HEK293T (cell line): ENCODE measurements at regions of chr2 and their contacts with region 1.

Region 1: GRCh38 chr2:71285706-71286105 is 45.9 kb upstream of the ZNF638 start:
- DNase-seq: no peak

Region 2: GRCh38 chr2:71306762-71307161 is 21.1 kb after region 1 on chr2:
- CTCF ChIA-PET with region 1: interaction called, 11 read pairs
- POLR2A ChIA-PET with region 1: no interaction called
- DNase-seq: no peak

Region 3: DNA sequence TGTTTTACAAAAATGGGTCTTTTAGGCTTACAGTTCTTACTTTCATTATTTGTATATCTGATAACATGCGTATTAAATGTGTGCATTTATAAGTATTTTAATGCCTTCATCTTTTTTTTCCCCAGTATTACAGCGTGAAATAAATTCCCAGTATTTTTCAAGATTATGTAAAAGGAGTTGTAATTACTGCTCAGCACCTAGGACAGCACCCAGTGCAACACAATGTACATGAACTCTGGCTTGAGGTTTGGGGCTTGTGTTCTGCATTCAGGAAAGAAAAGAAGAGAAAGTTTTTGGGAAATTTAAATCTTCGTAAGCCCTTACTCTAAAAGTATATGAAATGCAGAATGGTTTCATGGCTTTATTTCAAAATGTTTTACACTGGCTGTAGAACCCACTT is 62.6 kb after region 1 on chr2:
- CTCF ChIA-PET with region 1: no interaction called
- POLR2A ChIA-PET with region 1: no interaction called
- DNase-seq: no peak